ENCODE measurements at regions of chr10 and their contacts with region 1.

Region 1: GRCh38 chr10:116690356-116691322 is 51.7 kb downstream of the HSPA12A start:
- DNase-seq: no peak
- ATAC-seq: peak; percentile 47 to 62
- H3K4me3 ChIP-seq: no peak overlapping the region
- H3K27ac ChIP-seq: peak overlapping the region in 2 of 4 donors; percentile 9 to 10
- H3K4me1 ChIP-seq: peaks cover 8 to 10% of the 10 kb centered on the region in 2 donors
- H3K27me3 ChIP-seq: no peaks in the 10 kb centered on the region
- CTCF ChIP-seq: peak in 2 of 5 experiments; percentile 13 to 48
- POLR2A ChIP-seq: no peak

Region 2: DNA sequence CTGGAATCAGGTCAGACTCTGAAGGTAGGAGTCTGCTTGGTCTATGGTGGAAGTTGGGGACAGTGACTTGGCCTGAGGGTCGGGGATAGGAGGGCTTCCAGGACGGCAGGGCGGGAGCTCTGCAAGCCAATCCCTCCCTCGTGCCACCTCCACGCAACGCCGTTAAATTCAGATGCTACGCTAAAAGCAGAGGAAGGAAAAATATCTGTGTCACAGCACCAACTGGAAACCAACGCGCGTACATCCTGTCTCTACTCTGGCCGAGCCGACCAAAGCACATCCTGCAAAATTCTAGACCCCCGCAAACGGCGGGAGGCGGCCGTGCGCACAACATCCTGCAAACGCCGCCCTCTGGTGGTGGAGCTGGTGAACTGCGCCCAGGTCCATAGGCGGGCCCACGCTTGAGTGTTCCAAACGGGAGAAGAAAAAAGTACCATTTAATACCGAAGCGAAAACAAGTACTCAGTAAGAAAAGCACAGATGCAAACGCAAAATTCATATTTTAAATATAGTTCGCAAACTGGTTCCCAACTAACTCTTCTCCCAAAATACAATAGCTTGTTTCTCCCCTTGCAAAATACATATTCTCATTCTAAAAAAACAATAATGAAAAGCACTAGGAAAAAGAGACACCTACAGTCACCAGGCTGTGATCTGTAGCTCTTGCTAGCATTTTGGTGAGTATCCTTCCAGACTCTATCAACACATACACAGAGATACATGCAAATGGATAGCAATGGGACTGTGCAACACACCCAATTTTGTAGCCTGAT is 97.4 kb after region 1 on chr10:
- in situ Hi-C with region 1: loop called (anchors 5 to 10 kb)
- intact Hi-C with region 1: no loop called
- DNase-seq: peak; percentile 30 to 41
- ATAC-seq: peak; percentile 62 to 65
- H3K4me3 ChIP-seq: peak overlapping the region; percentile 4 to 34 (median 31)
- H3K27ac ChIP-seq: no peak overlapping the region
- H3K4me1 ChIP-seq: peaks cover 3 to 8% of the 10 kb centered on the region in 2 donors
- H3K27me3 ChIP-seq: no peaks in the 10 kb centered on the region
- CTCF ChIP-seq: peak; percentile 88 to 99 (median 92)
- POLR2A ChIP-seq: no peak

Region 3: GRCh38 chr10:117174439-117175214 is 484.0 kb after region 1 on chr10:
- in situ Hi-C with region 1: loop called in 2 of 4 experiments (anchors 10 to 25 kb)
- intact Hi-C with region 1: no loop called
- DNase-seq: peak; percentile 26 to 30
- ATAC-seq: peak; percentile 56 to 71
- H3K4me3 ChIP-seq: peak overlapping the region; percentile 25 to 45 (median 38)
- H3K27ac ChIP-seq: no peak overlapping the region
- H3K4me1 ChIP-seq: peaks cover 5 to 7% of the 10 kb centered on the region in 2 donors
- H3K27me3 ChIP-seq: peaks cover 34 to 53% (median 47%) of the 10 kb centered on the region in 3 donors
- CTCF ChIP-seq: peak; percentile 32 to 72 (median 59)
- POLR2A ChIP-seq: no peak

Measured in gastrocnemius medialis (tissue), 4 donors.